ENCODE measurements at regions of chr7 and their contacts with region 1.

Region 1: DNA sequence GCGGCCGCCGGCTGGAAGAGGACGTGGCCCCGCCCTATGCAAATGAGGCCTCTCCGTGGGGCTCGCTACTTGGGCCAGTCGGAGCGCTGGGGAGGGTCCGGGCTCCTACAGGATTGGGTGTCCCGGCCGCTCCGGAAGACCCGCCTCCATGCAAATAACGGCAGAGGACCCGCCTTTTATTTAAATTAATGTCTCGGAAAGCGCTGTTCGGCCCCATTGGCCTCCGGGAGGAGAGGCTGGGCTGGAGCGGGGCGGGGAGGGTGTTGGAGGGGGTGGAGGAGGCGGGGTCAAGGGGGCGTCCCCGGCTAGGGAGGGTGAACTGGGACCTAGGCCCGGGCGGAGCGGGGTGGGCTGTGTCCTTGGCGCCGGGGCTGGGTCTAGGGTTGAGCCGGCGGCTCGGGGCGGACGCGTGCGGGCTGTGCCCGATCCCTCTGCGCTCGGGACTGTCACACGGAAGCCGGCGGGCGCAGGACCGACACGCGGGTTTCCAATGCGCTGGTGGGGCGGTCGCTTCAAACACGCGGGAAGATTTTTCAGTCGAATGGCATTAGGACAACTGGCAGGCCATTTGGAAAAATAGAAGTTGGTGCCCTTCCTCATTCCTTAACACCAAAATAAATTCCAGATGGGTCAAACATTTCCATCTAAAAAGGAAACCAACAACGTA is 344 bp upstream of the POLM start:
- DNase-seq: peak; percentile 94 to 100 (median 97)
- ATAC-seq: peak; percentile 93
- H3K4me3 ChIP-seq: peak overlapping the region; percentile 51 to 63
- H3K4me3 Mint-ChIP-seq: peak overlapping the region; percentile 88
- H3K27ac ChIP-seq: peak overlapping the region; percentile 54 to 78
- H3K27ac Mint-ChIP-seq: peak overlapping the region; percentile 82
- H3K4me1 ChIP-seq: peaks cover 26% of the 10 kb centered on the region
- H3K4me1 Mint-ChIP-seq: peaks cover 33% of the 10 kb centered on the region
- H3K27me3 ChIP-seq: no peaks in the 10 kb centered on the region
- H3K27me3 Mint-ChIP-seq: no peaks in the 10 kb centered on the region
- CTCF ChIP-seq: no peak

Region 2: DNA sequence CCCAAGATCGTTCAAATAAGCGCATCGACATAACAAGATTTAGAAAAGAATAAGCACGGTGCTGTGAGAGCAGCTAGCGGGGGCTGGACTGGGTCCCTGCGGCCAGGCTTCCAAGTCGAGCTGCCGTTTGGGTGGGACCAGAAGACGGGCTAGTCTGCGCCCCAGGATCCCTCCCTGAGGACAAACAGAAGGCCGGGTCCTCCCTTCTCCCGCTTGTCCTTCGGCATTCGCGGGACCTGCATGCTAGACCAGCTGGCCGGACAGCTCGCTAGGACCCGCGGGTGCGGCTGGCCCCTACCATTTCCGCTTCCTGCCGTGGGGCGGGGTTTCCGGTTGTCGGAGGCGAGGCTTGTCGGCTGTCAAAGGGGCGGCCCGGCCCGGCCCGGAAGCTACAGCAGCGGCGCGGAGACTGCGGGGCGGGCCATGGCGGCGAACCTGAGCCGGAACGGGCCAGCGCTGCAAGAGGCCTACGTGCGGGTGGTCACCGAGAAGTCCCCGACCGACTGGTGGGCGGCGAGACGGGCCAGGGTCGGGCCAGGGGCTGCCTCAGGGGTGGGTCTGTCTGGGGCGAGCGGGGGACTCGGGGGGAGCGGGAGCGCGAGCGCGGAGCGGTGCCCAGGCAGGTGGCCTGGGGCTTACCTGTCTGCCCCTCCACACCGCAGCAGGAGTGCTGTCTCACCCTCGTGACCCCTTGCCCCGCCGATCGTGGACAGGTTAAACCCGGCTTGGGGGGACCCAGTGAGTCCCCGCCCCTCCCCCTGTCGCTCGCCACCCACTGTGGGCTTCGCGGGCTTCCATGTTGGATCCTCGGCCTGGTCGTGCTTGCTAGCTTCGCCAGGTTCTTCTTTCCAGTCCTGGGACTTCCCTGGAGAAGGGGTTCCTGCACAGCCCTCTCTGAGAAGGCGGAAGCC is 38.1 kb before region 1 on chr7 and contains the start of gene DBNL:
- CTCF ChIA-PET with region 1: interaction called, 3 read pairs
- POLR2A ChIA-PET with region 1: interaction called, 11 read pairs
- intact Hi-C with region 1: loop called (anchors 1 kb)
- DNase-seq: peak; percentile 66 to 95 (median 88)
- ATAC-seq: peak; percentile 48
- H3K4me3 ChIP-seq: peak within 1 kb of the TSS; percentile 76 to 78
- H3K4me3 Mint-ChIP-seq: peak within 1 kb of the TSS; percentile 91
- H3K27ac ChIP-seq: peak within 1 kb of the TSS; percentile 73 to 91
- H3K27ac Mint-ChIP-seq: peak within 1 kb of the TSS; percentile 97
- H3K4me1 ChIP-seq: peaks cover 49% of the 10 kb centered on the region
- H3K4me1 Mint-ChIP-seq: peaks cover 50% of the 10 kb centered on the region
- H3K27me3 ChIP-seq: no peaks in the 10 kb centered on the region
- H3K27me3 Mint-ChIP-seq: no peaks in the 10 kb centered on the region
- CTCF ChIP-seq: no peak
- total RNA-seq, gene DBNL: 82.1 to 84.8 TPM

Region 3: GRCh38 chr7:44072364-44073231 is 10.1 kb before region 1 on chr7:
- CTCF ChIA-PET with region 1: interaction called, 4 read pairs
- POLR2A ChIA-PET with region 1: interaction called, 43 read pairs
- intact Hi-C with region 1: loop called in 1 of 2 experiments (anchors 1 kb)
- DNase-seq: peak in 7 of 9 experiments; percentile 22 to 66 (median 54)
- ATAC-seq: peak; percentile 51
- H3K4me3 ChIP-seq: no peak overlapping the region
- H3K4me3 Mint-ChIP-seq: no peak overlapping the region
- H3K27ac ChIP-seq: no peak overlapping the region
- H3K27ac Mint-ChIP-seq: peak overlapping the region; percentile 79
- H3K4me1 ChIP-seq: peaks cover 19% of the 10 kb centered on the region
- H3K4me1 Mint-ChIP-seq: peaks cover 29% of the 10 kb centered on the region
- H3K27me3 ChIP-seq: no peaks in the 10 kb centered on the region
- H3K27me3 Mint-ChIP-seq: no peaks in the 10 kb centered on the region
- CTCF ChIP-seq: peak; percentile 53

Region 4: GRCh38 chr7:44123190-44124003 is 40.7 kb after region 1 on chr7 and contains the start of gene POLD2:
- CTCF ChIA-PET with region 1: interaction called, 4 read pairs
- POLR2A ChIA-PET with region 1: interaction called, 3 read pairs
- intact Hi-C with region 1: loop called (anchors 1 kb)
- DNase-seq: peak; percentile 93 to 98 (median 97)
- ATAC-seq: peak; percentile 98
- H3K4me3 ChIP-seq: peak within 1 kb of the TSS; percentile 78 to 83
- H3K4me3 Mint-ChIP-seq: peak within 1 kb of the TSS; percentile 93
- H3K27ac ChIP-seq: peak within 1 kb of the TSS; percentile 75 to 79
- H3K27ac Mint-ChIP-seq: peak within 1 kb of the TSS; percentile 66
- H3K4me1 ChIP-seq: peaks cover 12% of the 10 kb centered on the region
- H3K4me1 Mint-ChIP-seq: peaks cover 34% of the 10 kb centered on the region
- H3K27me3 ChIP-seq: no peaks in the 10 kb centered on the region
- H3K27me3 Mint-ChIP-seq: no peaks in the 10 kb centered on the region
- CTCF ChIP-seq: no peak
- total RNA-seq, gene POLD2: 44.0 to 48.9 TPM

Region 5: DNA sequence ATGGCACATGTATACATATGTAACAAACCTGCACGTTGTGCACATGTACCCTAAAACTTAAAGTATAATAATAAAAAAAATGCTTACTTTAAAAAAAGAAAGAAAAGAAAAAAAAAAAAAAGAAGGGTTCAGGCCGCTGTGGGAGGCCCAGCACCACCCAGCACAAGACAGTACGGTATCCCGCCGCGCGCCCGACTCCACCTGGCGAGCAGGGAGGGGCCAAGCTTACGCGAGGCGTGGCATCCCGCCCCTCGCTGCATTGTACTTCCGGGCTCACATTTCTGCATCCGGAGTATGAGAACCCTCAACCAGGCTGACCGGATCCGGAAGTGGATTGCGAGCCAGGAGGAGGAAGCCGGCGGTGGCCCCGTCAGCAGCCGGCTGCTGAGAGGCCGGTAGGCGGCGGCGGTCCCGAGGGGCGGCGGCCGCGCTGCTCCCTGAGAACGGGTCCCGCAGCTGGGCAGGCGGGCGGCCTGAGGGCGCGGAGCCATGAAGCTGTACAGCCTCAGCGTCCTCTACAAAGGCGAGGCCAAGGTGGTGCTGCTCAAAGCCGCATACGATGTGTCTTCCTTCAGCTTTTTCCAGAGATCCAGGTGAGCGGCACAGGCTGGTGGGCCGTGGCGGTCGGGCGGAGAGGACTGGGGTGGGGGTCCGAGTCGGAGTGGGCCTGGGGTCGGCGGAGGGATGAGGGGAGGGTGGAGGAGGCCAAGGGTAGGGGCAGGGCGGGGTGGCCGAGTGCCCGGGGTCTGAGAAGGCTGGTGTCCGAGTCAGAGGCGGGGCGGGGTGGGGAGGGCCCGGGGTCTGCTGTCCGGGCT is 118.2 kb after region 1 on chr7 and contains the start of gene YKT6:
- CTCF ChIA-PET with region 1: interaction called, 5 read pairs
- POLR2A ChIA-PET with region 1: interaction called, 5 read pairs
- intact Hi-C with region 1: loop called (anchors 1 kb)
- DNase-seq: peak; percentile 84 to 98 (median 95)
- ATAC-seq: peak; percentile 98
- H3K4me3 ChIP-seq: peak within 1 kb of the TSS; percentile 72 to 97
- H3K4me3 Mint-ChIP-seq: peak within 1 kb of the TSS; percentile 81
- H3K27ac ChIP-seq: peak within 1 kb of the TSS; percentile 65 to 78
- H3K27ac Mint-ChIP-seq: peak within 1 kb of the TSS; percentile 80
- H3K4me1 ChIP-seq: peaks cover 13% of the 10 kb centered on the region
- H3K4me1 Mint-ChIP-seq: peaks cover 34% of the 10 kb centered on the region
- H3K27me3 ChIP-seq: no peaks in the 10 kb centered on the region
- H3K27me3 Mint-ChIP-seq: peaks cover 5% of the 10 kb centered on the region
- CTCF ChIP-seq: peak; percentile 43
- total RNA-seq, gene YKT6: 111 to 114 TPM

Region 6: GRCh38 chr7:44748045-44748947 is 665.6 kb after region 1 on chr7 and contains the start of gene ZMIZ2:
- CTCF ChIA-PET with region 1: no interaction called
- POLR2A ChIA-PET with region 1: no interaction called
- intact Hi-C with region 1: loop called in 1 of 2 experiments (anchors 5 kb)
- DNase-seq: peak; percentile 84 to 98 (median 92)
- ATAC-seq: peak; percentile 91
- H3K4me3 ChIP-seq: peak within 1 kb of the TSS; percentile 77 to 80
- H3K4me3 Mint-ChIP-seq: peak within 1 kb of the TSS; percentile 79
- H3K27ac ChIP-seq: peak within 1 kb of the TSS; percentile 83
- H3K27ac Mint-ChIP-seq: peak within 1 kb of the TSS; percentile 90
- H3K4me1 ChIP-seq: peaks cover 27% of the 10 kb centered on the region
- H3K4me1 Mint-ChIP-seq: peaks cover 35% of the 10 kb centered on the region
- H3K27me3 ChIP-seq: no peaks in the 10 kb centered on the region
- H3K27me3 Mint-ChIP-seq: no peaks in the 10 kb centered on the region
- CTCF ChIP-seq: no peak
- total RNA-seq, gene ZMIZ2: 67.1 to 71.3 TPM